A673 (cell line): ENCODE measurements at regions of chrX and their contacts with region 1.

Region 1: DNA sequence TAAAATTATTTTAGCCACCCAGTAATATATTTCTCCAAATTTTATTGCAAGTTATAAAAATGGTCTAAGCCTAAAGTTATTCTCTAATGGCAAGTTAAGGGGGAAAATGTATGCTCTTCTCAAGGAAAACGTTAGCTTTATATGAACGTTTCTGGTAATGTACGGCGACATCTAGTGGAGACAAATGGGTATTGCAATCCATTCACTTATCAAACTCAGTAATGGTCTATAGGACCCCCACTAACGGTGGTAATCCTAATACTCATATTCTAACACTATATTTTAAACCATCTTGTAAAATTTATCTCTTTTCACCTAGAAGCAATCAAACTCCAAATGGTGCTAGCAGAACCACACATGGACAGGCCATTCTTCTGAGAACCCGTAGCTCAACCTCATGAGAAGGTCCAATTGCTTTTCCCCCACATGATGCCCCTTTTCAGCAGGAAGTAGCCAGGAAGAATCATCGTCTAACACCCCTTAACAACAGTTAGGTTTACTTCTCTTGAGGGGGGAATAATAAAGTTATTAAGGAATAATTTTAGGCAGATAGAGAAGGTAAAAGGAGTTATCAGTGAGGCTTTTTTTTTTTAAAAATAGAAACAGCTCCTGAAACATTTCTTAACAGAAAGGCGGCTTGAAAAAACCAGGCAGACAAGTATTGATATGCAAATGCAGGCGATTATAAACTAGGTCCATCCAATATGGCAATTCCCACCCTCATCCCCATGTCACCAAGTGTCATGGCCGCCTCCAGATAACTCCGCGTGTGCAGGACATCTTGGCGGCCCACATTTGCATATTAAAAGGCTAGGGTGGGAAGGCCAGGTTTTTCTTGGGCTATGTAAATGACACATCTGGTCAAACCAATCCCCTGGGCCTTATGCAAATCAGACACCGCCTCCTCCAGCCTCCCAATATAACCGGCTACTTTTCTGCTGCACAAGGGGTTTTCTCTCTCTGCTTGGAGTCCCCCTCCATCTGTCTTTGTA is 35.0 kb downstream of the NUDT11 start:
- DNase-seq: peak; percentile 71
- H3K4me3 ChIP-seq: no peak overlapping the region
- H3K27ac ChIP-seq: no peak overlapping the region
- H3K4me1 ChIP-seq: no peaks in the 10 kb centered on the region
- H3K27me3 ChIP-seq: no peaks in the 10 kb centered on the region
- CTCF ChIP-seq: peak; percentile 86

Region 2: GRCh38 chrX:51144852-51145442 is 316.4 kb before region 1 on chrX:
- CTCF ChIA-PET with region 1: interaction called, 13 read pairs
- POLR2A ChIA-PET with region 1: no interaction called
- intact Hi-C with region 1: loop called (anchors 5 kb)
- DNase-seq: peak; percentile 73
- H3K4me3 ChIP-seq: no peak overlapping the region
- H3K27ac ChIP-seq: no peak overlapping the region
- H3K4me1 ChIP-seq: no peaks in the 10 kb centered on the region
- H3K27me3 ChIP-seq: peaks cover 5% of the 10 kb centered on the region
- CTCF ChIP-seq: peak; percentile 83

Region 3: DNA sequence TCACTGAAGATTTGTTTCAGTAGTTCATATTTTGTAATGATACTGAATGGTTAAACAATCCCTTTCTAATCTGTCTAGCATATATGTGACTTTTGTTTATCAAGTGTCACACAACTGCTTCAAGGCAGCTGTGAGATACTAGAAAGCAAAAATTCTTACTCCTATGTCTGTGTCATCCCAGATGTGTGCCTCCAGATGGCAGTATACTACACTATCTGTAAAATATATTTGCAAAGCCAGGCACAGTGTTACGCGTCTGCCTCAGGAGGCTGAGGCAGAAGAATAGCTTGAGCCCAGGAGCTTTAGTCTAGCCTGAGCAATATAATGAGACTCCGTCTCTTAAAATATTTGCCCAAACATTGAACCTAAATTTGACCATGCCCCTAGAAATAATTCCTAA is 124.8 kb before region 1 on chrX:
- CTCF ChIA-PET with region 1: interaction called, 23 read pairs
- POLR2A ChIA-PET with region 1: no interaction called
- intact Hi-C with region 1: loop called (anchors 5 kb)
- DNase-seq: peak; percentile 67
- H3K4me3 ChIP-seq: no peak overlapping the region
- H3K27ac ChIP-seq: no peak overlapping the region
- H3K4me1 ChIP-seq: no peaks in the 10 kb centered on the region
- H3K27me3 ChIP-seq: no peaks in the 10 kb centered on the region
- CTCF ChIP-seq: peak; percentile 63

Region 4: DNA sequence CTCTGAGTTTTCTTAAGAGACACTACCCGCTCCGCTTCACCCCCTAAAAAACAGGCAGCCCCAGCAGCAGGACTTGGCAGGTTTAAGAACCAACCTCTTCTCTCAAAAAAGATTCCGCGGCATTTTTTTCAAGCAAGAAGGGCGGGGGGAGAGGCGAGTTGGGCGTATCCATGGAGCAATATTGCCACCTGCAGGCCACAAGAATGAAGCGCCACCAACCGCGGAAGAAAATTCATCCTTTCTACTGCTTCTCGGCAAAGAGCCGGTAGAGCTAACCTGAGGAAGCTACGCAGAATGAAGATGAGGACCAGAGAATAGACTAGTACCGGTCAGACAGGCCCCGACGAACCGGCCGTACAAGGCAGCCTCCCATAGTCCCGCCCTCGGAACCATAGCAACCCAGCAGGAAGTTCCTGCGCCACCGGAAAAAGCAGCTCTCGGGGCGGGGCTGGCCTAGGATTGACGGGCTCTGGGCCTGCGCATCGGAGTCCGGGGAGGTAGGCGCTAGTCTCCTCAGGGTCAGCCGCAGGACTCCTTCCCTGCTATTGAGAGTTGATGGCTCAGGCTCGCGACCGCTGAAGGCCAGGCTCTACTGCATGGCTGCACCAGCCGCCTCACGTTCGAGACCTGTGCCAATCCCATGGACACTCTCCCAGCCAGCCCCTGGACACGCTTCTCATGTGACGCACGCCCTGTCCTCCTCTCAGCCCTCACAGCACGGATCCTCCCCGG is 800.3 kb after region 1 on chrX:
- CTCF ChIA-PET with region 1: interaction called, 16 read pairs
- POLR2A ChIA-PET with region 1: no interaction called
- intact Hi-C with region 1: no loop called
- DNase-seq: peak; percentile 96
- H3K4me3 ChIP-seq: peak overlapping the region; percentile 61
- H3K27ac ChIP-seq: peak overlapping the region; percentile 90
- H3K4me1 ChIP-seq: peaks cover 28% of the 10 kb centered on the region
- H3K27me3 ChIP-seq: no peaks in the 10 kb centered on the region
- CTCF ChIP-seq: peak; percentile 99